A549 (cell line): ENCODE measurements at regions of chr3 and their contacts with region 1.

Region 1: GRCh38 chr3:150787741-150788370 is 24.9 kb upstream of the SIAH2 start:
- DNase-seq: peak; percentile 53 to 84
- ATAC-seq: peak; percentile 90 to 97
- H3K4me3 ChIP-seq: no peak overlapping the region
- H3K27ac ChIP-seq: no peak overlapping the region
- H3K4me1 ChIP-seq: no peaks in the 10 kb centered on the region
- CTCF ChIP-seq: peak; percentile 94
- EP300 ChIP-seq: no peak
- POLR2A ChIP-seq: no peak
- RAD21 ChIP-seq: peak; percentile 88 to 91

Region 2: DNA sequence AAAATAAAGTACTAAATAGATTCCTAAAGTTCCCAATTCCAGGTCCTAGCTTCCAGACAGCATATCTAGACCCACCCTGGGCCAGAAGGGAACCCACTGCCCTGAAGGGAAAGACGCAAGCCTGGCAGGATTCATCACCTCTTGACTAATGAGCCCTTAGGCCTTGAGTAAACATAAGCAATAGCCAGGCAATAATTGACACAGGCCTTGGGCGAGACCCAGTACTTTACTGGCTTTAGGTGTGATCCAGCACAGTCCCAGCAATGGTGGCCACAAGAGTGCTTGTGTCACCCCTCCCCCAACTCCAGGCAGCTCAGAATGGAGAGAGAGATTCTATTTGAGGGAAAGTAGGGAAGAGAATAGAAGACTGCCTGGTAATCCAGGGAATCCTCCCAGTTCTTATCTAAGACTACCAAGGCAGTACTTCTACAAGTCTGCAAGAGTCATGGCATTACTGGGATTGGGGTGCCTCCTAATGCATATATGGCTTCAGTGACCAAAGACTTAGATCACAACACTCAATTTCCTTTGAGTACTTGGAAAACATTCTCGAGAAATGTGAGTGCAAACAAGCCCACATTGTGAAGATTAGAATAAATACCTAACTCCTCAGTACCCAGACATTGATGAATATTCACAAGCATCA is 1099.6 kb before region 1 on chr3:
- CTCF ChIA-PET with region 1: no interaction called
- POLR2A ChIA-PET with region 1: no interaction called
- DNase-seq: no peak
- ATAC-seq: no peak
- H3K4me3 ChIP-seq: no peak overlapping the region
- H3K27ac ChIP-seq: no peak overlapping the region
- H3K4me1 ChIP-seq: no peaks in the 10 kb centered on the region
- CTCF ChIP-seq: no peak
- EP300 ChIP-seq: no peak
- POLR2A ChIP-seq: no peak
- RAD21 ChIP-seq: 0 out of 5 replicates have a peak, but pooled peaks of 1 of the 2 experiments have one; percentile 4

Region 3: GRCh38 chr3:150721285-150722130 is 66.3 kb before region 1 on chr3:
- CTCF ChIA-PET with region 1: interaction called, 14 read pairs
- POLR2A ChIA-PET with region 1: no interaction called
- DNase-seq: peak; percentile 65 to 75
- ATAC-seq: peak; percentile 71 to 86; a peak in 5 of 6 replicates
- H3K4me3 ChIP-seq: no peak overlapping the region
- H3K27ac ChIP-seq: no peak overlapping the region
- H3K4me1 ChIP-seq: no peaks in the 10 kb centered on the region; the same call in 2 of the 3 replicates
- CTCF ChIP-seq: peak; percentile 85
- EP300 ChIP-seq: no peak
- POLR2A ChIP-seq: no peak
- RAD21 ChIP-seq: peak; percentile 84 to 89

Region 4: DNA sequence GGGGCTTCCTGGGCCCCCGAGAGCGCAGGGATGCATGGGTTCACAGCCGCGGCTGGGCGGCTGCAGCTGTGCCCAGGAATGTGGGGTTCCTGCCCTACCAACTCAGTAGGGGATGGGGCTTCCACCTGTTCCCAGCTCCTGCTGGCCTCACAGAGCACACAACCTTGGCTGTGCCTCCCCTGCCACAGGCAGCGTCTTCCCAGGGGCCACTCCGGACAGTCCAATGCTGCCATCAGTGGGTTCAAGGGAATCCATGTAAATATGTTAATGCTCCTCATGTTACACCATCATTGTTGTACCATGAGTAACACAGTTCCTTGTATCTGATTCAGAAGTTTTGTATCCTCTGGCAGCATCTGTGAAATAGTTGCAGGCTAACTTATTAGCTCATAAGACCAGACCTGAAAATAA is 12.8 kb before region 1 on chr3:
- CTCF ChIA-PET with region 1: interaction called, 35 read pairs
- POLR2A ChIA-PET with region 1: no interaction called
- DNase-seq: no peak
- ATAC-seq: peak in 1 of 2 experiments; percentile 18; a peak in 1 of 6 replicates
- H3K4me3 ChIP-seq: no peak overlapping the region
- H3K27ac ChIP-seq: no peak overlapping the region
- H3K4me1 ChIP-seq: no peaks in the 10 kb centered on the region
- CTCF ChIP-seq: no peak
- EP300 ChIP-seq: no peak
- POLR2A ChIP-seq: no peak
- RAD21 ChIP-seq: no peak

Region 5: DNA sequence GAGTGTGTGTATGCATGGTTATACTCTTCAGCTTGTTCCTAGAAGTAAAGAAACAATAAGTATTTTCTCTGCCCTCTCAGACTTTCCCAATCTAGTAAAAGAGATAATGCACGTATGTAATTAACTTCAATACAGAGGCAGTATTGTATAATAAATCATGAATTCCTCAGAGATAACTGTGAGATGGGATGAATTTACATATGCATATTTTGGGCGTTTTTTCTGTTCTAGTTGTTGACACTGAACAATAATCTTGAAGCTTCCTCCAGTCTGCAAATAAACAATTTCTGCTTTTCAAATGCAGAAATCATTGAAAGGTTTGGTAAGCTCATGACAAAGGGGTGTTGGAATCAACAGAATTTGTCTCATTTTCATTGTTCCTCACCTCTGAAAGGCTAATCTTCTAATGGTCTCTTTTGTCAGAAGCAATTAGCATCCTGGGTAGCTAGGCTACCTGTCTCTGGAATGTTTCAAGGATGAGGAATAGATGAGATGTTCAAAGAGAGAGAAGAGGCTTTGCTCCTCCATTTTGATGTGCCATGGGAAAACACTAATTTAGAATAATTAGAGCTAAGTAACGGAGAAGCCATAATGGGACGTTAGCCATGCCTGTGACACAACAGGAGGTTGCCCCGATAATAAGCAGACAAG is 18.5 kb after region 1 on chr3:
- CTCF ChIA-PET with region 1: interaction called, 21 read pairs
- POLR2A ChIA-PET with region 1: interaction called, 3 read pairs
- DNase-seq: no peak
- ATAC-seq: no peak
- H3K4me3 ChIP-seq: no peak overlapping the region
- H3K27ac ChIP-seq: no peak overlapping the region
- H3K4me1 ChIP-seq: no peaks in the 10 kb centered on the region
- CTCF ChIP-seq: no peak
- EP300 ChIP-seq: no peak
- POLR2A ChIP-seq: no peak
- RAD21 ChIP-seq: no peak

Region 6: GRCh38 chr3:150870396-150870795 is 82.5 kb after region 1 on chr3:
- CTCF ChIA-PET with region 1: interaction called, 47 read pairs
- POLR2A ChIA-PET with region 1: no interaction called
- DNase-seq: no peak
- ATAC-seq: no peak
- H3K4me3 ChIP-seq: no peak overlapping the region
- H3K27ac ChIP-seq: no peak overlapping the region
- H3K4me1 ChIP-seq: no peaks in the 10 kb centered on the region
- CTCF ChIP-seq: no peak
- EP300 ChIP-seq: no peak
- POLR2A ChIP-seq: no peak
- RAD21 ChIP-seq: no peak